ENCODE measurements at regions of chr5 and their contacts with region 1.

Region 1: DNA sequence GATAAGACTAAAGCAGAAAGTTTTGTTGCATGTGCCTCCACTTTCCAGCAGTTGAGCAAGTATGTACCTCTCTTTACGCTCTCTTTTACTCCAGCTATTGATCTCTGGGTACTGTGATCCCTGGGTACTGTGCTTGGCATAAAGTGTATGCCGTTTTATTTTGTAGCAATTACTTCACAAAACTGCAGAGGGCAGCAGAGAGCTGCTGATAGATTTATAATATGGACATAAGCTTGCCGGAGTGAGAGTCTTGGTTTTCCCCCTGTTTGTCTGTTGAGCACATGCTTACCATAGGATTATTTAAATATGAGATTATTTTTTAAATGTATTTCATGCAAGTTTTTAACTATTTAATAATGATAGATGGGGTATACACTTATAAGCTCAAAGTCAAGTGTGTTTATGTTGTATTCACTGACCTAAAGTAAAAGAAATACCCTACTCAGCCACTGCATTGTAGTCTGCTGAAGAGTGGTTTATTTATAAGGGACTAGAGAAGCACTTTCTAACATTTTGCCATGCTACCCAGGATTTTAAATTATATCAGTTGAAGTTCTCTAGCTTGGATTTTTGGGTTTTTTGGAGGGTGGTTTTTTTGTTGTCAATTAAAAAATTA is 13.0 kb downstream of the TTC1 start:
- DNase-seq: peak; percentile 40 to 56
- H3K4me3 ChIP-seq: no peak overlapping the region
- H3K27ac ChIP-seq: no peak overlapping the region
- H3K4me1 ChIP-seq: no peaks in the 10 kb centered on the region
- H3K27me3 ChIP-seq: no peaks in the 10 kb centered on the region
- CTCF ChIP-seq: peak; percentile 90

Region 2: DNA sequence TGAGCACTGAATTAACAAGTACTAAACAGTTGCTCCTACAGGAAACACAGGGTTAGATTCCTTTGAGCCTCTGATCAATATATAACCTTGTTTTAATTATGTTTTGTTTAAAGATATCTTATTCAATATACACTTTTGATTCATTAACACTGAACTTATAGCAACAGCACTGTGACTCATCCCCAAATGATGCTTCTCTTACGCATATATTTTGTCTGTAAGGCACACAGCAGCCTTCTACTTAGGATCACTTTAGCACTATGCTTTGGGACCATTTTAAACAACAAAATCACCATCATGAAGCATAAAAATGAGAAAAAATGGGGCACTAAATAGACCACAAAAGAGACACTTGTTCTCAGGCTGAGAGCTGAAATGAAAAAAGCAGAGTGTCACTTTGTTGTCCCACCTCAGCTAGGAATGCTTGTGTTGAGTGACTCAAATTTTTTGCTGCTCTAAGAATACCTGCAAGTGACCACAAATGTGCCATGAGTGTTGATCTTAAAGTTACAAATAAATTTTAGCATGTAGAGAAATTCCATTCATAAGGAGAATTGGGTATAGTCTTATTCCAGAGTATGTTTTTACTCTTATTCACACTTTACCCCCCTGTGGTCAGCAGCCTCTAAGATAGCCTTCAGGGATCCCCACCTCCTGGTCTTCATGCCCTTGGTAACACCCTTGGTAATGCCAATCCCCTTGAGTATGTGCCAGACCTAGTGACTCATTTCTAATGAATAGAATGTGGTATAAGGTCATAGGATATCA is 439.0 kb before region 1 on chr5:
- CTCF ChIA-PET with region 1: no interaction called
- POLR2A ChIA-PET with region 1: no interaction called
- intact Hi-C with region 1: no loop called
- DNase-seq: peak; percentile 70 to 88
- H3K4me3 ChIP-seq: peak overlapping the region; percentile 5; the same call in 1 of the 2 replicates
- H3K27ac ChIP-seq: peak overlapping the region; percentile 98
- H3K4me1 ChIP-seq: peaks cover 45% of the 10 kb centered on the region
- H3K27me3 ChIP-seq: no peaks in the 10 kb centered on the region
- CTCF ChIP-seq: no peak

Region 3: DNA sequence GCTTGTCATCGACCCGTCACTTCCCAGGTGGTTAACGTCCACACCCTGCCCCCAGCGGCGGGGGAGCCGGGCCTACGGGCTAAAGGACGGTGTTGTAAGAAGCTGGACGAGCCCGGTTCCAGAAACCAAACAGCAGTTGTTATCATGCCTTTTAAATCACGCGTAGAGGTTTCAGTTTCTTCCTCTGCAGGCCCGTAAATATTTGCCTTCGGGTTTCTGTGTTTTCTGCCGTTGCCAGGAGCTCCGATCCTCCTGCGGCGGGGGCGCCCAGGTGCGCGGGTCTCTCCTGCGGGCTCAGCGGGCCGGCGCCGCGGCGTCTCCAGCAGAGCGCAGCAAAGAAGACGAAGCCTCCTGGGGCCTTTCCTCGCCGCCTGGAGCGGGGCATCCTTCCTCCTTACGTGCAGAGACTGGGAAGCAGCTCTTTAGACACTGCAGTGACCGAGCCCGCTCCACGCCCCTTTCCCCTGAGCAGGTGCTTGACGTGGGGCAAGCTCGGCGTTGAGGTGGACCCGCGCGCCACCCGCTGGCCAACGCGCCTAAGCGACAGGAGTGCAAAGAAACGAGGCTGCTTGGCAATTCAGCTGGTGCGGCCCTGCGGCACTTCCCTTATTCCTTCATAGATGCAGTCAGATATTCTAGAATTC is 34.8 kb before region 1 on chr5:
- CTCF ChIA-PET with region 1: no interaction called
- POLR2A ChIA-PET with region 1: no interaction called
- intact Hi-C with region 1: no loop called
- DNase-seq: peak; percentile 85 to 94
- H3K4me3 ChIP-seq: peak overlapping the region; percentile 65; the same call in 1 of the 2 replicates
- H3K27ac ChIP-seq: peak overlapping the region; percentile 55
- H3K4me1 ChIP-seq: peaks cover 13% of the 10 kb centered on the region
- H3K27me3 ChIP-seq: no peaks in the 10 kb centered on the region
- CTCF ChIP-seq: peak; percentile 90

Region 4: DNA sequence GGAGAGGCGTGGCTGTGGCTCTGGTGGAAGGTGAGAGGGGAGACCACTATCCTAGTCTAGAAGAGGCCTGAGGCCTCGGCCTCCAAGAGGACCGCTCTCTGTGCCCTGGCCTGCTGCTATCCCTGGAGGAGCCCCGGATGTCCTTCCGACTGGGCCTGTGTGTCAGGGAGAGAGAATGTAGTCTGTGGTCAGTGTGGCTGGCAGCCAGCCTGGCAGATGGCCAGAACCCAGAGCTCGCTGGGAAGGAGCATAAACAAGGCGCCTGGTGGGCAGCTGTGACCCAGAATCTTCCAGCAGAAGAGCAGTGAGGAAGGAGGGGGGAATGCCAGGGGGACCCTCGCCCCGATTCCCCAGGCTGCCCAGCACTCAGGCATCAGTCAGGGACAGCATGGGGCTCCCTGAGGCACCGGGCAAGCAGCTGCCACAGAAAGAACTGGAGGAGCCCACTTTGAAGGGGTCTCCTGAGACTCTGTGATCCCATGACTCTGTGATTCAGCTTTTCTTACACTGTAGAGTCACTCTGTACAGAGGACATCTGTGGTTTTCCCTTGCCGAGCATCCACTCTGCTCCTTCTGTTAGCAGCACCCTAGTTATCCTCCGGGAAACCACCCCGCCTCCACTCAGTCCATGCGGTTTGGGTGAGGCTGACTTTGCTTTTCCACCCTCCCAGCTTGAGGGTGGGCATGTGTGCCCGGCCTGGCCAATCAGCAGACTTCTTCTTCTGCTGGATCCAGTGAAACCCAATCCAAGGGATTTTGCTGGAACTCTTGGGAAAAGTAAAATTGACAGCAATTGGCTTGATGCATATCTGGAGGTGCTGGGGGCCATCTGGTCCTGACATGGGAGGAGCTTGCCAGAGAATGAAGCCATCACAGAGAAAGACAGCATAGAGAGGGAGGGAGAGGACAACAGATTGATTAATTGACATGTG is 143.5 kb after region 1 on chr5:
- CTCF ChIA-PET with region 1: no interaction called
- POLR2A ChIA-PET with region 1: no interaction called
- intact Hi-C with region 1: no loop called
- DNase-seq: peak; percentile 91 to 96
- H3K4me3 ChIP-seq: peak overlapping the region; percentile 43; the same call in 1 of the 2 replicates
- H3K27ac ChIP-seq: peak overlapping the region; percentile 93
- H3K4me1 ChIP-seq: peaks cover 41% of the 10 kb centered on the region
- H3K27me3 ChIP-seq: no peaks in the 10 kb centered on the region
- CTCF ChIP-seq: no peak

Region 5: DNA sequence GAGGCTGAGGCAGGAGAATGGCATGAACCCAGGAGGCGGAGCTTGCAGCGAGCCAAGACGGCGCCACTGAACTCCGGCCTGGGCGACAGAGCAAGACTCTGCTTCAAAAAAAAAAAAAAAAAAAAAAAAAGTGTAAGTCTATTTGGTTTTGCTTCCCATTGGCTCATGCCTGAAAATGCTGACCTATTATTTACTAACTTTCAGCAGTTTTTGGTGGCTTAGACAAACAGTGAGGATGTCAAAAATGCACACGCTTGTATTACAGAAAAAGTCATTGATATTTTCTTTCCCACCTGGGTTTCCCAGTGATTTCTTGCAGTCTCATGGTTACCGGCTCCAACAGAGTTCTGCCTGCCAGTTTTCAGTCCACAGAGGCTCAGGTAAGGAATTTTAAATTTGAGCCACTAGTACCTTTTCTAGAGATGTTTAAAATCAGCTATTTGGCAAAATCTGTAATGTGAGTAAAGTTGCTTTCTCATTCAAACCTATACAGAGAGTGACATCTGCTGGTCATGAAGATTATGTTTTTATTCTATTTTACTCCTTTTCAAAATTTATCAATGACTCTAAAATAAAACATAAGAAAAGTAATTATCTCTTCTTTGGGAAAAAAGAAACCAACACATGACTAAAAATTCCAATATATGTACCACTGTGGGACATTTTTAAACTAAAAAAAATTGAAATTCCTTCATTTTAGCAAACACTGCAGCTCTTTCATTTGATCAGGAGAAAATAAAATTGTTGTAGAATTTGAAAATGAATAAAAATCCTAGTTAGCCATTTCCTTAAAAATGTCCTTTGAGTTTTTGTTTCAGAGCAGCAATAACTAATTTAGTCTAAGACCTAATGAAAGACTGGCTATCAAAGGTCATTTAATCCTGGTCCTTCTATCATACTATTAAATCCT is 369.1 kb after region 1 on chr5:
- CTCF ChIA-PET with region 1: interaction called, 11 read pairs
- POLR2A ChIA-PET with region 1: no interaction called
- intact Hi-C with region 1: loop called (anchors 1 kb)
- DNase-seq: no peak
- H3K4me3 ChIP-seq: no peak overlapping the region
- H3K27ac ChIP-seq: no peak overlapping the region
- H3K4me1 ChIP-seq: no peaks in the 10 kb centered on the region
- H3K27me3 ChIP-seq: no peaks in the 10 kb centered on the region
- CTCF ChIP-seq: peak; percentile 74